PC-9 (cell line): ENCODE measurements at regions of chr9 and their contacts with region 1.

Region 1: DNA sequence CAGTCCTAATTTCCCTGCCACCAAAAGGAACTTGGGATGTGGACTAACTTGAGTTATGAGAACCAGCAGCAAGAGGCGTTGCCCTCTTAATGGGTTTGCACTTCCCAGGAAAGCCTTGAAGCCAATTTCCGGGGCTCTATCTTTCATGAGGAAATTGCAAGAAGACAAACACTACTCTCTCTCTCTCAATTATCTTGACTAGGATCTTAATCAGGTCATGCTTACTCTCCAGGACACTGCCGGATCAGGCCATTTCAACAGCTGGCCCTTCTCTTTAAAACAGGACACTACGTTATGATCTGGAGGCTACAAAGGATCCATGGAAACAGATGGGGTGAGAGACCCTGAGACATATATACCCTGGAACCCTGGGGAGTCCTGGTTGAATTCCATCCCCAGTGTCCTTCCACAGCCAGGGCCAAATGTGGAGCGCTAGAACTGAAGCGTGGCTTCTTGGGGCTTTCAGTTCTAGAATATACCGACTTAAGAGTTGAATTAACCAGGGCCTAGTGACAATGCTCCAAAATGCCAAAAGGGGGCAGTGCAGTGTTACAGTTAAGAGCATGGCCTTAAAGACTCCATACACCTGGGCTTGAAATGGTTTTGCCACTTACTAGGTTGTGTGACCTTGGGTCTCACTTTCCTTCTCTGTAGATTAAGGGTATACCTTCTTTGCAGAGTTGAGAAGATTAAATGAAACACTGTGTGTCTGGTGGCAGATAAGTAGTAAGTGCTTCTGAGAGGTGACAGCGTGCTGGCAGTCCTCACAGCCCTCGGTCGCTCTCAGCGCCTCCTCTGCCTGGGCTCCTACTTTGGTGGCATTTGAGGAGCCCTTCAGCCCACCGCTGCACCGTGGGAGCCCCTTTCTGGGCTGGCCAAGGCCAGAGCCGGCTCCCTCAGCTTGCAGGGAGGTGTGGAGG is 21.1 kb downstream of the FAM219A start:
- DNase-seq: peak; percentile 30 to 50
- H3K4me3 ChIP-seq: no peak overlapping the region
- H3K27ac ChIP-seq: no peak overlapping the region
- H3K4me1 ChIP-seq: no peaks in the 10 kb centered on the region
- H3K27me3 ChIP-seq: no peaks in the 10 kb centered on the region
- CTCF ChIP-seq: peak; percentile 76

Region 2: DNA sequence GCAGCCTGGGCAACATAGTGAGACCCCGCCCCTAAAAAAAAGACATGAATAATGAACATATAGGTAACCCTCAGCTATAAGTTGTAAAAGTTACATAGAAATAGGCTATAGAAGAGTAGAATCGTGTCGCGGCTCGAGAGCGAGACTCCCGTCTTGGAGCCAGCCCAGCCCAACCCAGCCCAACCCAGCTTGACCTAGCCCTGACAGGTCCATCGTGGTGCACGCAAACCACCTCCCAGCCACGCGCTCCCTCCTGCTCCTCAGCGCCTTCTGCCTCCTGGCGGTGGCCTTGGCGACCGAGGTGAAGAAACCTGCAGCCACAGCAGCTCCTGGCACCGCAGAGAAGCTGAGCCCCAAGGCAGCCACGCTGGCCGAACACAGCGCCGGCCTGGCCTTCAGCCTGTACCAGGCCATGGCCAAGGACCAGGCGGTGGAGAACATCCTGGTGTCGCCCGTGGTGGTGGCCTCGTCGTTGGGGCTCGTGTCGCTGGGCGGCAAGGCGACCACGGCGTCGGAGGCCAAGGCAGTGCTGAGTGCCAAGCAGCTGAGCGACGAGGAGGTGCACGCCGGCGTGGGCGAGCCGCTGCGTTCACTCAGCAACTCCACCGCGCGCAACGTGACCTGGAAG is 119.0 kb before region 1 on chr9:
- CTCF ChIA-PET with region 1: interaction called, 13 read pairs
- POLR2A ChIA-PET with region 1: no interaction called
- intact Hi-C with region 1: no loop called
- DNase-seq: no peak
- H3K4me3 ChIP-seq: no peak overlapping the region
- H3K27ac ChIP-seq: no peak overlapping the region
- H3K4me1 ChIP-seq: no peaks in the 10 kb centered on the region
- H3K27me3 ChIP-seq: no peaks in the 10 kb centered on the region
- CTCF ChIP-seq: no peak

Region 3: GRCh38 chr9:34479431-34479866 is 42.2 kb after region 1 on chr9:
- CTCF ChIA-PET with region 1: no interaction called
- POLR2A ChIA-PET with region 1: no interaction called
- intact Hi-C with region 1: no loop called
- DNase-seq: no peak
- H3K4me3 ChIP-seq: no peak overlapping the region
- H3K27ac ChIP-seq: no peak overlapping the region
- H3K4me1 ChIP-seq: peaks cover 3% of the 10 kb centered on the region
- H3K27me3 ChIP-seq: no peaks in the 10 kb centered on the region
- CTCF ChIP-seq: no peak

Region 4: DNA sequence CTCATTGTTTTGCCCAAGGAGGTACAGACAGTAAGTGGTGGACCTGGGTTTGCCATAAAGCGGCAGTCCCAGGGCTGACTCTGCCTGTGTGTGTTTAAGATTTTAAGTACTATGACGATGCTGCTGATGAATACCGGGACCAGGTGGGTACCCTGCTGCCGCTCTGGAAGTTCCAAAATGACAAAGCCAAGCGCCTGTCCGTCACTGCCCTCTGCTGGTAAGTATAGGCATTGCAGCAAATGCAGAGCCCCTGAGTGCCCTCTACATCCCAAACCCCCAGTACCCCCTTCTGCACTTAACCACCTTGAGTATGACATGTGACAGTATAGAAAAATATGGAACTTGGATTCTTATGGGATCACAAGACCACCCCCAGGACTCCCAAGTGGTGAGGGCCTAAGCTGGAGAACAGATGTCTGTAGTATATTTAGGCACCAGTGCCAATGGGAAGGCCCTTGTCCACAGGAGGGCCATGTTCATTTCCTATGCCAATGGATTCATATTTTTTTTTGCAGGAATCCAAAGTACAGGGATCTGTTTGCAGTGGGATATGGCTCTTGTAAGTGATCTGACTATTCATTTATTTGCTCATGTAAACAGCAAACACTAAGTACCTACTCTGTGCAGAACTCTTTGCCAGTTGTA is 63.5 kb after region 1 on chr9:
- CTCF ChIA-PET with region 1: no interaction called
- POLR2A ChIA-PET with region 1: no interaction called
- intact Hi-C with region 1: loop called (anchors 1 kb)
- DNase-seq: peak in 1 of 2 experiments; percentile 46
- H3K4me3 ChIP-seq: no peak overlapping the region
- H3K27ac ChIP-seq: no peak overlapping the region
- H3K4me1 ChIP-seq: no peaks in the 10 kb centered on the region
- H3K27me3 ChIP-seq: 0 out of 2 replicates have a peak, but pooled peaks cover 7% of the 10 kb centered on the region
- CTCF ChIP-seq: peak; percentile 91

Region 5: GRCh38 chr9:34546834-34547827 is 109.9 kb after region 1 on chr9:
- CTCF ChIA-PET with region 1: no interaction called
- POLR2A ChIA-PET with region 1: no interaction called
- intact Hi-C with region 1: loop called (anchors 2 kb)
- DNase-seq: peak in 1 of 2 experiments; percentile 41
- H3K4me3 ChIP-seq: no peak overlapping the region
- H3K27ac ChIP-seq: no peak overlapping the region
- H3K4me1 ChIP-seq: no peaks in the 10 kb centered on the region
- H3K27me3 ChIP-seq: peaks cover 23% of the 10 kb centered on the region; the same call in 1 of the 2 replicates
- CTCF ChIP-seq: peak; percentile 72

Region 6: DNA sequence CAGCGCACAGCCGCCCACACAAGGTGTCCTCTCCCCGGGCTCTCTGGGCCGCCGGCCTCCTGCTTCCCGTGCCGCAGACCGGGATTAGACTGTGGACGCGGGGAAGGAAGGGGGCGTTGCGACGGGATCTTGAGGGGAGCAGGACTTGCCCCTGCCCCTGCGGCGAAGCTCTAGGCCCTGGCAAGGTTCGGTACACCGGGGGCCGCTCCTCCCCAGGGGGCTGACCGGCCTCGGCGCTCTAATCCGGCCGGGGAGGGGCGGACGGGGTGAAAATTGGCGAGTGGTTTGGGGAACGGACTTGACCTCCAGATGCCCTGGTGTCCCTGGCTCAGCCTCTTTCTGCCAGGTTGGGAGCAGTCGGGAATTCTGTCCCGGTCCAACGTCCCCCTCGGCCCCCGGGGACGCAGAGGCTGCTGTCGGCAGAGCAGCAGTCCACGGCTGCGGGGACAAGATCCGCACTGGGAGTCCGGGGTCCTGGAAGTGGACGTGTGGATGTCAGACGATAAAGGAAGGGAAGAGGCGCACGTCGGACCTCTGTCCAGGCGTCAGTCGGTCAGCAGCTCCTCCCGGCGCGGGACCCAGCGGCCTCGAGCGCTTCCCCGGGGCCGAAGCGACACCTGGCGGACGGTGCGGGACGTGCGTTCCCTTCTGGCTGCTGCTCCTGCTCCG is 154.1 kb after region 1 on chr9:
- CTCF ChIA-PET with region 1: no interaction called
- POLR2A ChIA-PET with region 1: no interaction called
- intact Hi-C with region 1: loop called (anchors 1 kb)
- DNase-seq: peak; percentile 49 to 75
- H3K4me3 ChIP-seq: no peak overlapping the region
- H3K27ac ChIP-seq: no peak overlapping the region
- H3K4me1 ChIP-seq: no peaks in the 10 kb centered on the region
- H3K27me3 ChIP-seq: peaks cover 24% of the 10 kb centered on the region
- CTCF ChIP-seq: peak; percentile 80